ENCODE measurements at regions of chr10 and their contacts with region 1.

Region 1: GRCh38 chr10:88932539-88933256 is 19.9 kb downstream of the ACTA2 start:
- DNase-seq: peak; percentile 72 to 94 (median 81)
- H3K4me3 ChIP-seq: no peak overlapping the region
- H3K27ac ChIP-seq: no peak overlapping the region
- H3K4me1 ChIP-seq: peaks cover 0 to 11% (median 8%) of the 10 kb centered on the region in 3 donors
- H3K27me3 ChIP-seq: no peaks in the 10 kb centered on the region
- CTCF ChIP-seq: peak; percentile 96

Region 2: DNA sequence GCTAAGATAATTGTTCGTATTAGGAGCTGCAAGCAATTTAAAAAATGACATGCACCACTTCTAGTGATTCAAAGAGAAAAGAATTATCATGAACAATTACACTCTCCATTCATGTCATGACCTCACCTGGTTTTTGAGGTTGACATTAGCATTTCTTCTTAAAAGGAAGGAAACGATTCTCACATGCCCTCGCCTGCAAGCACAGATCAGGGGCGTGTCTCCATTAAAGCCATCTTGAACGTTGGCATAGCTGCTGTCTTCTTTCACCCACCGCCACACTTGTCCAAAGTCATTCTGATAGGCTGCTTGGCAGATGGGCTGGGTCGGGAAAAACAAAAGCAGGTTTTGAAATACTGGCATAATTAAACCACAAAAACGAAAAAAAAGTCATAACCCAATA is 101.0 kb before region 1 on chr10:
- intact Hi-C with region 1: loop called (anchors 5 kb)
- DNase-seq: no peak
- H3K4me3 ChIP-seq: no peak overlapping the region
- H3K27ac ChIP-seq: no peak overlapping the region
- H3K4me1 ChIP-seq: no peaks in the 10 kb centered on the region
- H3K27me3 ChIP-seq: no peaks in the 10 kb centered on the region
- CTCF ChIP-seq: no peak

Region 3: GRCh38 chr10:88986549-88987242 is 54.0 kb after region 1 on chr10:
- intact Hi-C with region 1: loop called (anchors 5 kb)
- DNase-seq: peak in 3 of 5 donors; percentile 17 to 65 (median 60)
- H3K4me3 ChIP-seq: no peak overlapping the region
- H3K27ac ChIP-seq: no peak overlapping the region
- H3K4me1 ChIP-seq: peaks cover 4 to 12% (median 5%) of the 10 kb centered on the region in 3 donors
- H3K27me3 ChIP-seq: no peaks in the 10 kb centered on the region
- CTCF ChIP-seq: peak; percentile 76

Region 4: GRCh38 chr10:89217057-89217990 is 284.6 kb after region 1 on chr10:
- intact Hi-C with region 1: loop called (anchors 5 kb)
- DNase-seq: peak in 3 of 5 donors; percentile 48 to 78 (median 65)
- H3K4me3 ChIP-seq: no peak overlapping the region
- H3K27ac ChIP-seq: peak overlapping the region in 1 of 2 donors; percentile 40
- H3K4me1 ChIP-seq: peaks cover 0 to 3% (median 0%) of the 10 kb centered on the region in 3 donors
- H3K27me3 ChIP-seq: no peaks in the 10 kb centered on the region
- CTCF ChIP-seq: peak; percentile 77